Ascending aorta (tissue), 2 donors: ENCODE measurements at regions of chr1 and their contacts with region 1.

Region 1: GRCh38 chr1:100719490-100719889 is at the start of gene VCAM1:
- DNase-seq: no peak
- H3K4me3 ChIP-seq: peak within 1 kb of the TSS; percentile 41 to 46
- H3K27ac ChIP-seq: peak within 1 kb of the TSS in 1 of 2 donors; percentile 17
- H3K4me1 ChIP-seq: no peaks in the 10 kb centered on the region
- H3K27me3 ChIP-seq: no peaks in the 10 kb centered on the region
- CTCF ChIP-seq: no peak
- total RNA-seq, gene VCAM1: 9.8 TPM

Region 2: GRCh38 chr1:100699744-100700143 is 19.7 kb before region 1 on chr1:
- intact Hi-C with region 1: no loop called
- DNase-seq: no peak
- H3K4me3 ChIP-seq: no peak overlapping the region
- H3K27ac ChIP-seq: peak overlapping the region; percentile 57 to 64
- H3K4me1 ChIP-seq: peaks cover 0 to 29% of the 10 kb centered on the region in 2 donors
- H3K27me3 ChIP-seq: no peaks in the 10 kb centered on the region
- CTCF ChIP-seq: no peak

Region 3: GRCh38 chr1:100760511-100760910 is 41.0 kb after region 1 on chr1:
- intact Hi-C with region 1: loop called (anchors 5 kb)
- DNase-seq: no peak
- H3K4me3 ChIP-seq: no peak overlapping the region
- H3K27ac ChIP-seq: no peak overlapping the region
- H3K4me1 ChIP-seq: no peaks in the 10 kb centered on the region
- H3K27me3 ChIP-seq: no peaks in the 10 kb centered on the region
- CTCF ChIP-seq: no peak

Region 4: GRCh38 chr1:101136739-101137138 is 417.2 kb after region 1 on chr1:
- intact Hi-C with region 1: no loop called
- DNase-seq: no peak
- H3K4me3 ChIP-seq: no peak overlapping the region
- H3K27ac ChIP-seq: no peak overlapping the region
- H3K4me1 ChIP-seq: peaks cover 0 to 9% of the 10 kb centered on the region in 2 donors
- H3K27me3 ChIP-seq: no peaks in the 10 kb centered on the region
- CTCF ChIP-seq: peak in 1 of 3 experiments; percentile 50

Region 5: DNA sequence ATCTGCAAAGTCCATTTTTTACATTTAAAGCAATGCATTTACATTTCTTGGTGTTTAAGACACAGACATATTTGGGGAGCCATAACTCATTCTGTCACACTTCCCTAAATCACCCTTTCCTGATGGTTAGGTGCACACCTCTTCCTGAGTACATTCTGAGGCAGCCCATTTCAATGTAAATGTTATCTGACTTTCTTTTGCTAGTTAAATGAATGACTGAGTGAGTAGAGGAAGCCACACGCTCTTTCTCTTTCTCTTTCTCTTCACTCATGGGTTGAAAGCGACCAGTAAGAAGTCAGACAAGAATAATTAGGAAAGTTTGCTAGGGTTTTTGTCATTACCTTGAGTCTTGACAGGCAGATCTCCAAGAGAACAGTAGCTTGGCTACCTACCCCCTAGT is 660.5 kb after region 1 on chr1:
- intact Hi-C with region 1: no loop called
- DNase-seq: no peak
- H3K4me3 ChIP-seq: no peak overlapping the region
- H3K27ac ChIP-seq: no peak overlapping the region
- H3K4me1 ChIP-seq: no peaks in the 10 kb centered on the region
- H3K27me3 ChIP-seq: no peaks in the 10 kb centered on the region
- CTCF ChIP-seq: no peak